Natural killer cell (primary cell): ENCODE measurements at regions of chr3 and their contacts with region 1.

Region 1: GRCh38 chr3:179562591-179563270 is at the start of gene ACTL6A:
- DNase-seq: peak; percentile 95 to 98
- ATAC-seq: peak; percentile 91 to 97 (median 94)
- H3K4me3 ChIP-seq: peak within 1 kb of the TSS; percentile 84
- H3K4me3 Mint-ChIP-seq: peak within 1 kb of the TSS; percentile 93
- H3K27ac ChIP-seq: peak within 1 kb of the TSS; percentile 48
- H3K27ac Mint-ChIP-seq: peak within 1 kb of the TSS; percentile 85 to 90
- H3K4me1 ChIP-seq: peaks cover 7% of the 10 kb centered on the region
- H3K4me1 Mint-ChIP-seq: peaks cover 24 to 32% of the 10 kb centered on the region in 2 donors
- H3K27me3 ChIP-seq: no peaks in the 10 kb centered on the region
- H3K27me3 Mint-ChIP-seq: peaks cover 3% of the 10 kb centered on the region in 2 donors
- CTCF ChIP-seq: no peak
- total RNA-seq, gene ACTL6A: 23.1 to 29.9 (median 24.1) TPM

Region 2: GRCh38 chr3:179015551-179016020 is 547.1 kb before region 1 on chr3:
- intact Hi-C with region 1: loop called (anchors 2 kb)
- DNase-seq: peak in 1 of 2 donors; percentile 90
- ATAC-seq: peak; percentile 96 to 100 (median 99)
- H3K4me3 ChIP-seq: no peak overlapping the region
- H3K4me3 Mint-ChIP-seq: no peak overlapping the region
- H3K27ac ChIP-seq: no peak overlapping the region
- H3K27ac Mint-ChIP-seq: peak overlapping the region; percentile 61 to 64
- H3K4me1 ChIP-seq: no peaks in the 10 kb centered on the region
- H3K4me1 Mint-ChIP-seq: peaks cover 6 to 10% of the 10 kb centered on the region in 2 donors
- H3K27me3 ChIP-seq: no peaks in the 10 kb centered on the region
- H3K27me3 Mint-ChIP-seq: no peaks in the 10 kb centered on the region
- CTCF ChIP-seq: peak; percentile 82

Region 3: GRCh38 chr3:179322286-179323196 is 240.2 kb before region 1 on chr3 and contains the start of gene ZNF639:
- intact Hi-C with region 1: loop called (anchors 1 kb)
- DNase-seq: peak; percentile 85 to 95
- ATAC-seq: peak; percentile 88 to 96 (median 89)
- H3K4me3 ChIP-seq: peak within 1 kb of the TSS; percentile 98
- H3K4me3 Mint-ChIP-seq: peak within 1 kb of the TSS; percentile 90
- H3K27ac ChIP-seq: peak within 1 kb of the TSS; percentile 97
- H3K27ac Mint-ChIP-seq: peak within 1 kb of the TSS; percentile 92 to 94
- H3K4me1 ChIP-seq: peaks cover 17% of the 10 kb centered on the region
- H3K4me1 Mint-ChIP-seq: peaks cover 29% of the 10 kb centered on the region in 2 donors
- H3K27me3 ChIP-seq: no peaks in the 10 kb centered on the region
- H3K27me3 Mint-ChIP-seq: no peaks in the 10 kb centered on the region
- CTCF ChIP-seq: peak; percentile 80
- total RNA-seq, gene ZNF639: 51.8 to 54.5 (median 53.5) TPM

Region 4: DNA sequence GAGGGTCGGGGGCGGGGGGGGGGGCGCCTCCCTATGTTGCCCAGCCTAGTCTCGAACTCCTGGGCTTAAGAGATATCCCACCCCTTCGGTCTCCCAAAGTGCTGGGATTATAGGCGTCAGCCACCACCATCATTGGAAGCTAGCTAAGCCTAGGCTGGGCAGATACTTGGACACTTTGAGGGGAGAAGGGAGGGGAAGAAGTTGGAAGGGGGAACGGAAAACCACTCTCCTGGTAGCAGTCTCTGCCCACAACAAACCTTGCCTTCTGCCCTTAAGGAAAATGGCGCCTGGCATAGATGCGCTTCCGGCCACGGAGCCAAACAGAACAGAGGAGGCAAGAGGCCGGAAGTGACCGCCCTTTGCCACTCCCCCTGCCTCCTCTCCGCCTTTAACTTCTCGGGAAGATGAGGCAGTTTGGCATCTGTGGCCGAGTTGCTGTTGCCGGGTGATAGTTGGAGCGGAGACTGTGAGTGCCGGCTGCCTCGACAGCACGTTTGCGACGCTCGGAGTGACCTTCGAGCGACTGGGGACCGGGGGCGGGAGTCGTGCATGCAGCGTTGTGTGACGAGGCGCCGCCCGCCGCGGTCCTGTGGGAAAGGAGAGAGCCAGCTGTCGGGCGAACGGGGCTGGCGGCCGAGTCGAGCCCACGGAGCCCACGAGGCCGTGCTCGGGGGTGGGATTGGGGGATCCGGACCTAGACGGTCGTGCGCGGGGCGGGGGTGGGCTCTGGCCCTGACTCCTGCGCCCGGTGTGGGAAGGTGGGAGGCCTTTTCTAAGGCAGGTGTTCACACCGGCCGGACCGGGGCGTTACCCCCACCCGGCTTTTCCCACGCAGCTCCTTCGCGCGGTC is 215.2 kb before region 1 on chr3 and contains the start of gene MFN1:
- intact Hi-C with region 1: loop called (anchors 1 kb)
- DNase-seq: peak; percentile 81 to 95
- ATAC-seq: peak; percentile 98 to 99 (median 99)
- H3K4me3 ChIP-seq: peak within 1 kb of the TSS; percentile 90
- H3K4me3 Mint-ChIP-seq: peak within 1 kb of the TSS; percentile 95
- H3K27ac ChIP-seq: peak within 1 kb of the TSS; percentile 66
- H3K27ac Mint-ChIP-seq: peak within 1 kb of the TSS; percentile 90 to 98
- H3K4me1 ChIP-seq: peaks cover 10% of the 10 kb centered on the region
- H3K4me1 Mint-ChIP-seq: peaks cover 17 to 18% of the 10 kb centered on the region in 2 donors
- H3K27me3 ChIP-seq: no peaks in the 10 kb centered on the region
- H3K27me3 Mint-ChIP-seq: no peaks in the 10 kb centered on the region
- CTCF ChIP-seq: no peak
- total RNA-seq, gene MFN1: 42.4 to 52.9 (median 47.2) TPM

Region 5: GRCh38 chr3:179604321-179605078 is 41.8 kb after region 1 on chr3 and contains the starts of genes MRPL47 and NDUFB5:
- intact Hi-C with region 1: loop called (anchors 1 kb)
- DNase-seq: peak; percentile 86 to 98
- ATAC-seq: peak; percentile 99 to 100 (median 99)
- H3K4me3 ChIP-seq: peak within 1 kb of the TSS; percentile 60
- H3K4me3 Mint-ChIP-seq: peak within 1 kb of the TSS; percentile 100
- H3K27ac ChIP-seq: peak within 1 kb of the TSS; percentile 81
- H3K27ac Mint-ChIP-seq: peak within 1 kb of the TSS; percentile 99 to 100
- H3K4me1 ChIP-seq: peaks cover 22% of the 10 kb centered on the region
- H3K4me1 Mint-ChIP-seq: peaks cover 20 to 41% of the 10 kb centered on the region in 2 donors
- H3K27me3 ChIP-seq: no peaks in the 10 kb centered on the region
- H3K27me3 Mint-ChIP-seq: no peaks in the 10 kb centered on the region
- CTCF ChIP-seq: no peak
- total RNA-seq, gene MRPL47: 23.2 to 30.8 (median 25.5) TPM
- total RNA-seq, gene NDUFB5: 19.0 to 25.4 (median 23.9) TPM